Head of caudate nucleus (tissue), 42 donors: ENCODE measurements at regions of chr11 and their contacts with region 1.

Region 1: GRCh38 chr11:67391304-67392132 is at the start of gene RAD9A:
- DNase-seq: peak; percentile 92 to 99 (median 96)

Region 2: DNA sequence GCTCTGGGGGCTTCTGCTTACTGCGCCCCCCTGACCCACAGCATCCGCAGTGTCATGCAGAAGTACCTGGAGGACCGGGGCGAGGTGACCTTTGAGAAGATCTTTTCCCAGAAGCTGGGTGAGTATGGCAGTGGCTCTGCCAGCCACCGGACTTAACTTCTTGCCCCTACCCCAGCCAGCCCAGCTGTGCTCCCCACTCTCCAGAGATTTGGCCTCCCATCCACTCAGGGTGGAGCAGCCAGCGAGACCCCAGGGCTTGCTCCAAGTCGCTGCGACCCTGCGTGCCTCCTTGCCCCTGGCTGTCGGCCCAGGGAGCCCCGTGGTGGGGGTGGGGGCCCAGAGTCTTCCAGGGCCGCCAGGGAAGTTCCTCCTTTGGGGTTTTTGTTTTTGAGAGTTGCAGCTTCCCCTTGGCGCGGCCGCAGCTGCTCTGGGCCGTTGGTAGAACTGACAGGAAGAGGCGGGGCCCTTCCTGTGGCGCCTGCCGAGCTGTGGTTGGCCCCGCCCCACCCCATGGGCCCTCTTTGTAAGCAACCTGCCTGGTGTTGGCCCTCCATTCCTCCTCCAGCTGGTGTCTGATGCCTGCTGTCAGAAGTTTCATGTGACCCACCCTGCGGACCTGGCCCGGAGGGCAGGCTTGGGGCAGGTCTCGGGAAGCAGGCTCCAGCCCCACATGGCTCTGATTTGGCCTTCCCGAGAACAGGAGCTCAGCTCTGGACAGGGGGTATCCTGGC is 114.1 kb before region 1 on chr11:
- intact Hi-C with region 1: no loop called
- DNase-seq: peak in 34 of 42 donors; percentile 32 to 82 (median 58)

Region 3: DNA sequence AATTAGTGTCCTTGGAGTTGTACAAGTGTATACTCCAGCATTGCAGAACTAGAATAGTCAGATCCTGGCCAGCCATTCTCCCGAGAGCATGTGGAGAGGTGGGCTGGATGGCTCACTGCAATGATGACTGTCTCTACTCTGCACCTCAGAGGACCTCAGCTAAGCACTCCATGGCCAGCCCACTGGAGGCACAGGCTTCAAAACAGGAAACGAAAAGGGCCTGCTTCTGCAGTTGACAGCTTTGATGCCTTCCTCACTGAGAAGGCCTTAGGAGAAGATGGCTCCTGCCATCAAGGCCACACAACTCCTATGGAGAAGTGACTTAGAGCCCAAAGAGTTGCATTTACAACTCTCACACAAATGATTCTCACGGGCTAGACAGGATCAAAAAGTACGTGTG is 47.3 kb before region 1 on chr11:
- intact Hi-C with region 1: no loop called
- DNase-seq: no peak

Region 4: DNA sequence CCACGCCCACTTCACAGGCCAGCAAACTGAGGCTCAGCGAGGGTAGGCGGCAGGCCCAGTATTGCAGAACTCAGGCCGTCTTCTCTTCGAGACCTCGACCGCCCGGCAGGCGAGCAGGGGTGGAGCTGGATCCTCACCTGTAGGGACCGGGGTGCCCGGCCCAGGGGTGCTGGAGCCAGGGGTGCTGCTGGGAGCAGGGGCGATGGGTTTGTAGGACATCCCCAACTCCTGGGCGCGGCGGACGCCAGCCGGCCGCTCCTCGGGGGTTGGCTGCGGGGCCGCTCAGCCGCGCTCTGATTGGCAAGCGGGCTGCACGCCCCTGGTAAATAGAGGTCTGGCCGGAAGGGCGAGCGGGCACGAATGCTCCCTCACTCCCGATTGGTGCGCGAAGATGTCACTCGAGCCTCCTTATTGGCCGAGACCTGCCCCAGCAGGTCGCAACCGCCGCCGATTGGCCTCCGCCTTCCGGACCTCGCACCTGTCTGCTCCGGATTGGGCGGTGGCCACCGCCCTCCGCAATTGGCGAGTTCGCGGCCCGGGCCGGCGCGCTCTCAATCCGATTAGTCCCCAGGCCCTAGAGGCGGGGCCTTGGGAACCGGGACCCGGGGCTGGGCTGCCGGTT is 116.5 kb after region 1 on chr11 and contains the start of gene CDK2AP2:
- intact Hi-C with region 1: loop called (anchors 5 kb)
- DNase-seq: peak; percentile 98 to 100 (median 99)